ENCODE measurements at regions of chr12 and their contacts with region 1.

Region 1: GRCh38 chr12:112198120-112198733 is 72.9 kb downstream of the TRAFD1 start:
- DNase-seq: peak; percentile 49 to 68 (median 54)
- ATAC-seq: peak; percentile 60
- H3K4me3 ChIP-seq: no peak overlapping the region
- H3K27ac ChIP-seq: no peak overlapping the region
- H3K4me1 ChIP-seq: no peaks in the 10 kb centered on the region
- H3K27me3 ChIP-seq: no peaks in the 10 kb centered on the region
- CTCF ChIP-seq: peak; percentile 15 to 56 (median 46)
- POLR2A ChIP-seq: no peak

Region 2: GRCh38 chr12:112061137-112061536 is 137.1 kb before region 1 on chr12:
- intact Hi-C with region 1: no loop called
- DNase-seq: no peak
- ATAC-seq: no peak
- H3K4me3 ChIP-seq: no peak overlapping the region
- H3K27ac ChIP-seq: no peak overlapping the region
- H3K4me1 ChIP-seq: no peaks in the 10 kb centered on the region
- H3K27me3 ChIP-seq: no peaks in the 10 kb centered on the region
- CTCF ChIP-seq: no peak
- POLR2A ChIP-seq: no peak

Region 3: GRCh38 chr12:112341046-112341825 is 143.0 kb after region 1 on chr12:
- intact Hi-C with region 1: no loop called
- DNase-seq: no peak
- ATAC-seq: no peak
- H3K4me3 ChIP-seq: no peak overlapping the region
- H3K27ac ChIP-seq: no peak overlapping the region
- H3K4me1 ChIP-seq: peaks cover 9% of the 10 kb centered on the region
- H3K27me3 ChIP-seq: no peaks in the 10 kb centered on the region
- CTCF ChIP-seq: no peak
- POLR2A ChIP-seq: no peak

Region 4: GRCh38 chr12:112368856-112369255 is 170.6 kb after region 1 on chr12:
- intact Hi-C with region 1: no loop called
- DNase-seq: no peak
- ATAC-seq: no peak
- H3K4me3 ChIP-seq: no peak overlapping the region
- H3K27ac ChIP-seq: no peak overlapping the region
- H3K4me1 ChIP-seq: peaks cover 9% of the 10 kb centered on the region
- H3K27me3 ChIP-seq: no peaks in the 10 kb centered on the region
- CTCF ChIP-seq: no peak
- POLR2A ChIP-seq: no peak

Region 5: DNA sequence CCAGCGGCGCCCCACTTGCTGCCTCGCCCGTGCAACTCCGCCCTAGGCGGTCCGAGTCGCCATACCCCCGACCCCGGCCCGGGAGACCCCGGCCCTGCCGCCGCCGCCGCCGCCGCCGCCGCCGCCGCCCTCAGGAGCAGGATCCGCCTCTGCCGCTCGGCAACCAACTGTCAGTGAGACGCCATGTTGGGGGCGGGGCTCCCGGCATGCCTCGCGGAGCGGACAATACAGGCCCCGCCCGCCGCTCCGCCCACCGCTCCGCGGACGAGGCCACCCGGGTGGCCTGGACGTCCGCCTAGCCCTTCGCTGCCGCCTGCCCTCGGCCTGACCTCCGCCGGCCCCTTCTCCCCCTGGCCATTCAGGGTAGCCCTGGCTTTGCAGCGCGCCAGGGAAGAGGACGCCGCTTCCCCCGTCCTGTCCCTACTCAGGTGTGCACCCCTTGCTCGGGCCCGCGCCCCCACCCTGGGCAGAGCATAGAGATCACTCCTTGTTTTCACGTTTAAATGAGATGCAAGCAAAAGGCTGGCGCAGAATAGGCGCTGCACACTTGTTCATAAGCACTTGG is 184.1 kb after region 1 on chr12 and contains the start of gene HECTD4:
- intact Hi-C with region 1: loop called (anchors 10 kb)
- DNase-seq: peak; percentile 95 to 99 (median 96)
- ATAC-seq: peak; percentile 98
- H3K4me3 ChIP-seq: peak within 1 kb of the TSS; percentile 17 to 88
- H3K27ac ChIP-seq: peak within 1 kb of the TSS; percentile 72 to 88 (median 83)
- H3K4me1 ChIP-seq: peaks cover 20% of the 10 kb centered on the region
- H3K27me3 ChIP-seq: no peaks in the 10 kb centered on the region
- CTCF ChIP-seq: no peak
- POLR2A ChIP-seq: peak; percentile 67 to 84 (median 84)
- total RNA-seq, gene HECTD4: 23.3 to 45.2 TPM

Region 6: GRCh38 chr12:112664569-112664968 is 466.3 kb after region 1 on chr12:
- intact Hi-C with region 1: no loop called
- DNase-seq: no peak
- ATAC-seq: no peak
- H3K4me3 ChIP-seq: no peak overlapping the region
- H3K27ac ChIP-seq: no peak overlapping the region
- H3K4me1 ChIP-seq: no peaks in the 10 kb centered on the region
- H3K27me3 ChIP-seq: no peaks in the 10 kb centered on the region
- CTCF ChIP-seq: no peak
- POLR2A ChIP-seq: no peak

Measured in body of pancreas (tissue), 4 donors.